Activated T-helper 2 cell treated with anti-CD3 and anti-CD28 coated beads, Interferon-gamma antibody, Interleukin-2, Interleukin-4, amounts not matched to agents 10 μg/mL and 5 μg/mL and 100 μg/mL, durations not matched to agents 14 hours and 24 hours and 36 hours (primary cell): ENCODE measurements at regions of chr3 and their contacts with region 1.

Region 1: DNA sequence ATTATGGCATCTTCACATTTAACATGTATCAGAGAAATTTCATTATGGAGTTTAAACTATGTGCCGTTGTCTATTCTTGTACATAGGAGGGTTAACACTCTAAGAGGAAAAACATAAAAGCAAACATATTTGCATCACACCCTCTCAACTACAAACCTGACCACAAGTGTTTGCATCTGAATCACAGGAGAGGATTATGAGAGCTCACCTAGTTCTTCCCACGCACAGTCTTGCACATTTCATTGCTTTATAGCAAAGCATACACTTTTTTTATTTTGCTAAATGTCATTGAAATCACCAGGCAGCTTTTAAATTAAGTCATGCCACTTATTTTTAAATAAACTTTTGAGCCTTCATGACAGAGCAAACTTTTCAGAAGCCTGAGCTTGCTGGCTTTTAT is 12.5 kb downstream of the TRAT1 start:
- DNase-seq: no peak
- H3K4me3 Mint-ChIP-seq: peak overlapping the region; percentile 81
- H3K27ac Mint-ChIP-seq: peak overlapping the region; percentile 98
- H3K4me1 Mint-ChIP-seq: peaks cover 80% of the 10 kb centered on the region
- H3K27me3 Mint-ChIP-seq: no peaks in the 10 kb centered on the region

Region 2: GRCh38 chr3:108292905-108293328 is 542.2 kb before region 1 on chr3:
- intact Hi-C with region 1: loop called (anchors 5 kb)
- DNase-seq: no peak
- H3K4me3 Mint-ChIP-seq: no peak overlapping the region
- H3K27ac Mint-ChIP-seq: peak overlapping the region; percentile 80
- H3K4me1 Mint-ChIP-seq: peaks cover 60% of the 10 kb centered on the region
- H3K27me3 Mint-ChIP-seq: no peaks in the 10 kb centered on the region

Region 3: GRCh38 chr3:108806316-108806715 is 28.8 kb before region 1 on chr3:
- intact Hi-C with region 1: loop called (anchors 1 kb)
- DNase-seq: peak; percentile 58
- H3K4me3 Mint-ChIP-seq: no peak overlapping the region
- H3K27ac Mint-ChIP-seq: peak overlapping the region; percentile 68
- H3K4me1 Mint-ChIP-seq: peaks cover 22% of the 10 kb centered on the region
- H3K27me3 Mint-ChIP-seq: no peaks in the 10 kb centered on the region

Region 4: GRCh38 chr3:108862865-108863798 is 28.0 kb after region 1 on chr3:
- intact Hi-C with region 1: loop called (anchors 1 kb)
- DNase-seq: no peak
- H3K4me3 Mint-ChIP-seq: no peak overlapping the region
- H3K27ac Mint-ChIP-seq: peak overlapping the region; percentile 98
- H3K4me1 Mint-ChIP-seq: peaks cover 25% of the 10 kb centered on the region
- H3K27me3 Mint-ChIP-seq: no peaks in the 10 kb centered on the region

Region 5: DNA sequence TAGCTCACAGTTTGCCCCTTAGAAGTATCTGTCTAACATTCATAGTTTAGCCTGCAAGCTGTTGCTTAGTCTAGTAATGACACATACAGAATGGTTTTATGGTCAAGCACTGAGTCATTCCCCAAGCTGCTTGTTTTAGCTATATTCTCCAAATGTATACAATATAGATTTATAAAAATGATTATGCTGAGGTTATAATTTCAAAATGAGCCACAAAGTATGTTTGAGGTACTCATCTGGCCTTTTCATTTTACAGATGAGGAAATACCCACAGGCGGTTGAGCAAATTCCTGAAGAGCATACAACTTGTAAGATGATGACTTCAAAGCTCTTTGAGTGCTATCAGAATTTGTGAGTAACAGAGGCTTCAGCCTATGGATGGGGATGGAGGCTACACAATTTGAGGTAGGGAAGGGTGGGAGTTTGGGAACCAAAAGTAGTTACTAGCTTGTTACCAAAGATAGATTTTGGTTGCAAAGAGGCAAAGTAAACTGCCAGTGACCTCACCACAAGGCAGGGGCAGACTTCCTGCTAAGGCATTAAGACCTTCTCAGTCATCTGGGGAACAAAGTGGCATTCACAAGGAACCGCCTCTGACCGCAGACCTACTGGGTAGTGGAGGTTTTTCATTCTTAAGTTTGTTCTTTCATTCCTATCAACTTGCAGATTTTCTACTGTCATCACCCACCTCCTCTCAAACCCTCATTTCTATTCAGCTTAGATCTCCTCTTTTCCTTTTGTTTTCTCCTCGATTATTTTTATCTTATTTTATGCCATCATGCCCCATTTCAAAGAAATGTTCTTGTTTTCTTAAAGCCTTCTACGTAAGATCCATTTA is 1979.3 kb after region 1 on chr3:
- intact Hi-C with region 1: loop called (anchors 10 kb)
- DNase-seq: peak; percentile 35
- H3K4me3 Mint-ChIP-seq: peak overlapping the region; percentile 43
- H3K27ac Mint-ChIP-seq: peak overlapping the region; percentile 91
- H3K4me1 Mint-ChIP-seq: peaks cover 29% of the 10 kb centered on the region
- H3K27me3 Mint-ChIP-seq: peaks cover 26% of the 10 kb centered on the region